Activated B cell treated with CpG ODN at 0.5 μM for 24 hours (primary cell): ENCODE measurements at regions of chr12 and their contacts with region 1.

Region 1: GRCh38 chr12:66301944-66302826 is at the start of gene HELB:
- DNase-seq: peak; percentile 80
- ATAC-seq: peak; percentile 95
- H3K4me3 Mint-ChIP-seq: peak within 1 kb of the TSS; percentile 99
- H3K27ac Mint-ChIP-seq: peak within 1 kb of the TSS; percentile 86
- H3K4me1 Mint-ChIP-seq: peaks cover 41% of the 10 kb centered on the region
- H3K27me3 Mint-ChIP-seq: peaks cover 1% of the 10 kb centered on the region
- CTCF ChIP-seq: no peak
- total RNA-seq, gene HELB: 4.7 and 7.2 TPM in 2 replicates

Region 2: GRCh38 chr12:64759035-64759901 is 1542.9 kb before region 1 on chr12 and contains the start of gene GNS:
- CTCF ChIA-PET with region 1: no interaction called
- POLR2A ChIA-PET with region 1: no interaction called
- intact Hi-C with region 1: loop called (anchors 1 kb)
- DNase-seq: peak; percentile 98
- ATAC-seq: peak; percentile 93
- H3K4me3 Mint-ChIP-seq: peak within 1 kb of the TSS; percentile 92
- H3K27ac Mint-ChIP-seq: peak within 1 kb of the TSS; percentile 83
- H3K4me1 Mint-ChIP-seq: peaks cover 41% of the 10 kb centered on the region
- H3K27me3 Mint-ChIP-seq: no peaks in the 10 kb centered on the region
- CTCF ChIP-seq: no peak
- total RNA-seq, gene GNS: 16.3 and 17.7 TPM in 2 replicates

Region 3: DNA sequence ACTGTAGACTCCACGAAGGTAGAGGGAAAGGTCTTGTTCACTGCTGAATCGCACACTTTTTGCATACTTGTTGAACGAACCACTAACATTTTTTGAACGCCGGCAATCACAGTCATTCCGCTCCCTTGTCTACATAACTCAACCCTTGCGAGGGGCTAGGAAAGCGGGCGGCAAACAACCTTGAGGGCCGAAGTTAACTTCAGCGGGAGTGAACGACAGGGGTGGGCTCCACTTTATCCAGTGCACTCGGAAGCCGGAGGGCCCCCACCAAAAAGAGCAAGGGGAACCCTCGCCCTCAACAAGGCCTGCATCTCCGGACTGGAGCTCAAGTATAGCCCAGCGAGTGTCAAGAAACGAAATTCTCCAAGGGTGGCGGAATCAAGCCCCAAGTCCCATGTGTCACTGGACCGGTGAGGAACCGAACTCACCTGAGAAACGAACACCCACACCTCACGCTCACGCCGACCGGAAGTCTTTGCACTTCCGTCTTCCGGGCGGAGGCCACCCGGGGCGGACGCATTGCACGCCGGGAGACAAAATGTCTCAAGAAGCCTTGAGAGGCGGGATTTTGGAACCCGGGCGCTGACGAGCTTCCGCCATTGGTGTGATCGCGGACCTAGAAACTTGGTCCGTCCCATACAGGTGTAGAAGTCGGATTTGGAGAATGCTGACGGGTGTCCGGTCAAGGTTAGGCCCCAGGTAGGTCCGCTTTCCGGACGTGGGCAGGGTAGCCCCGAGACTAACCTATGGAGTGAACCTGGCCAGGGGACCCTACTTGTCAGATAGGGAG is 171.7 kb before region 1 on chr12 and contains the start of gene LLPH:
- CTCF ChIA-PET with region 1: no interaction called
- POLR2A ChIA-PET with region 1: interaction called, 12 read pairs
- intact Hi-C with region 1: loop called (anchors 2 kb)
- DNase-seq: peak; percentile 78
- ATAC-seq: peak; percentile 94
- H3K4me3 Mint-ChIP-seq: peak within 1 kb of the TSS; percentile 99
- H3K27ac Mint-ChIP-seq: peak within 1 kb of the TSS; percentile 96
- H3K4me1 Mint-ChIP-seq: peaks cover 43% of the 10 kb centered on the region
- H3K27me3 Mint-ChIP-seq: no peaks in the 10 kb centered on the region
- CTCF ChIP-seq: no peak
- total RNA-seq, gene LLPH: 29.5 and 35.5 TPM in 2 replicates

Region 4: DNA sequence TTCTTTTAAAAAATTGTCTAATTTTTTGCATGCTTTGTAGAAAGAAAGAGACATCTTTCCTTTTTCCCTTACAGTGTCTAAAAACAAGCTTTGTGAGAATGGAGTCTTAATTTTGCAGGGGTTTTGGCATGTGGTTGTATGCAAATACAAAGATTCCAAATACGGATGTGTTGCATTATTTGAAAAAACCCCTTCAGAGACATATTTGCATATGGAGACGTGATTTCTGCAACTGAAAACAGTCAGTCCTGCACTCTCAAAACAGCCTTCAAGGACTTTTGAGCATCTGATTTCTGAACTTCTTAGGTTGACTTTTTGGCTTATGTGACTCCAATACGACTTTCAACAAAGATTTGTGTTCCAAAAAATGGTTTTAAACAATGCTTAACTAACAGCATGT is 105.4 kb before region 1 on chr12:
- CTCF ChIA-PET with region 1: no interaction called
- POLR2A ChIA-PET with region 1: no interaction called
- intact Hi-C with region 1: loop called (anchors 2 kb)
- DNase-seq: no peak
- ATAC-seq: peak; percentile 95
- H3K4me3 Mint-ChIP-seq: peak overlapping the region; percentile 52
- H3K27ac Mint-ChIP-seq: peak overlapping the region; percentile 41
- H3K4me1 Mint-ChIP-seq: peaks cover 32% of the 10 kb centered on the region
- H3K27me3 Mint-ChIP-seq: peaks cover 11% of the 10 kb centered on the region
- CTCF ChIP-seq: no peak

Region 5: GRCh38 chr12:66269757-66270383 is 32.3 kb before region 1 on chr12:
- CTCF ChIA-PET with region 1: interaction called, 3 read pairs
- POLR2A ChIA-PET with region 1: no interaction called
- intact Hi-C with region 1: loop called (anchors 2 kb)
- DNase-seq: no peak
- ATAC-seq: no peak
- H3K4me3 Mint-ChIP-seq: no peak overlapping the region
- H3K27ac Mint-ChIP-seq: no peak overlapping the region
- H3K4me1 Mint-ChIP-seq: no peaks in the 10 kb centered on the region
- H3K27me3 Mint-ChIP-seq: peaks cover 2% of the 10 kb centered on the region
- CTCF ChIP-seq: no peak

Region 6: DNA sequence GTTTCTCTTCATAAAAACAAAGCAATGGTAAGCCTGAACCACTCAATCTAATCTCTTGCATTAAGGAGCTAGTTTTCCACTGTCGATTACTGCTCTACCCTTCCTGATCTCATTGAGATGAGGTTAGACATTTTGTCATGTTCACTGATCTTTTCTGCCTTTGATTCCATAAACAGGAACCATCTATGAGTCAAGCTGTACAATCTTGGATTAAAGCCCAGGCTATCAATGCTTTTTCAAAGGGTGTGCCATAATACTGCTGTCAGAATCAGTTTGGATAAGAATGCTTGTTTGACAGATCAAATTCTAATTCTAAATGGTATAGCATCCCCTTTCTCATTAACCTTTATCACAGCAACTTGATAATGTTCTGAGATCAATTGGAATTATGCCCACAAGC is 360.5 kb after region 1 on chr12:
- CTCF ChIA-PET with region 1: no interaction called
- POLR2A ChIA-PET with region 1: interaction called, 5 read pairs
- intact Hi-C with region 1: loop called (anchors 2 kb)
- DNase-seq: no peak
- ATAC-seq: peak; percentile 4
- H3K4me3 Mint-ChIP-seq: peak overlapping the region; percentile 50
- H3K27ac Mint-ChIP-seq: peak overlapping the region; percentile 30
- H3K4me1 Mint-ChIP-seq: peaks cover 46% of the 10 kb centered on the region
- H3K27me3 Mint-ChIP-seq: no peaks in the 10 kb centered on the region
- CTCF ChIP-seq: no peak